Activated CD4-positive, alpha-beta memory T cell treated with anti-CD3 and anti-CD28 coated beads for 36 hours (primary cell): ENCODE measurements at regions of chr1 and their contacts with region 1.

Region 1: DNA sequence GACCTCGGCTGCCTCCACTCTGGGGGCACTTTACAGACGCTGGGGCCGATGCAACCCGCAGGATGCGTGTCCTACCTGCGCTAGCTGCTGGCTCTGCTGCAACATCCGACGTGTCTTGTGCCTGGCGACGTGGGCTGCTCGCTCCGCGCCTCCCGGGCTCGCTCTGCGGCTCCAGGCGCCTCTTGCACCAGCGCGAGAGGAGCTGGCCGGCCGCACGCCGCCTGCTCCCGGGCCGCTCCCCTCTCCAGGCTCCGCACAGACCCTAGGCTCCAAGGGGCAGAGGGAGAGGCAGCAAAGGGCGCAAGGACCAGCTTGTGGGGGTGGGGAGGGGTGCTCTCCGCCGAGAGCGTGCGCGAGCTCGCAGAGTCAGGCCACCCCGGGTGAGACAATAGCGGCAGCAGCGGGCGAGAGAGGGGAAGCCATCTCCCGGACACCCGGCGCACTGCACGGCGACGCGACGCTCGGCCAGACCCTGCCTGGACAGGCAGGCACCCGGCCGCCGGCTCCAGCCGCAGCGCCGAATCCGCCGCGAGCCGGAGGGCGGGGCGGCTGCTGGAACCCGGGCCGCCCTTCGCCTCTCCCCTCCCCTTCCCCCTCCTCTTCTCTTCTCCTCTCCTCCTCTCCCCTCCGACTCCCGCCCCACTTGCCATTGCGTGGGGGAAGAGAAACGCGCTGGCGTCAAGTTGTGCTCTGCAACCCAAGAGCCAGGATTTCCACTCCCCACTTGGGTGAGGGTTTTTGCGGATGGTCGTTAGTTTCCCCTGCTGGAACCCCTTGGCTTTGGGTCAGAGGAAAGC is at the start of gene PIK3C2B:
- DNase-seq: peak; percentile 86
- H3K4me3 Mint-ChIP-seq: peak within 1 kb of the TSS; percentile 84
- H3K27ac Mint-ChIP-seq: peak within 1 kb of the TSS; percentile 92
- H3K4me1 Mint-ChIP-seq: peaks cover 50% of the 10 kb centered on the region
- H3K27me3 Mint-ChIP-seq: no peaks in the 10 kb centered on the region
- total RNA-seq, gene PIK3C2B: 43.4 to 46.4 TPM

Region 2: DNA sequence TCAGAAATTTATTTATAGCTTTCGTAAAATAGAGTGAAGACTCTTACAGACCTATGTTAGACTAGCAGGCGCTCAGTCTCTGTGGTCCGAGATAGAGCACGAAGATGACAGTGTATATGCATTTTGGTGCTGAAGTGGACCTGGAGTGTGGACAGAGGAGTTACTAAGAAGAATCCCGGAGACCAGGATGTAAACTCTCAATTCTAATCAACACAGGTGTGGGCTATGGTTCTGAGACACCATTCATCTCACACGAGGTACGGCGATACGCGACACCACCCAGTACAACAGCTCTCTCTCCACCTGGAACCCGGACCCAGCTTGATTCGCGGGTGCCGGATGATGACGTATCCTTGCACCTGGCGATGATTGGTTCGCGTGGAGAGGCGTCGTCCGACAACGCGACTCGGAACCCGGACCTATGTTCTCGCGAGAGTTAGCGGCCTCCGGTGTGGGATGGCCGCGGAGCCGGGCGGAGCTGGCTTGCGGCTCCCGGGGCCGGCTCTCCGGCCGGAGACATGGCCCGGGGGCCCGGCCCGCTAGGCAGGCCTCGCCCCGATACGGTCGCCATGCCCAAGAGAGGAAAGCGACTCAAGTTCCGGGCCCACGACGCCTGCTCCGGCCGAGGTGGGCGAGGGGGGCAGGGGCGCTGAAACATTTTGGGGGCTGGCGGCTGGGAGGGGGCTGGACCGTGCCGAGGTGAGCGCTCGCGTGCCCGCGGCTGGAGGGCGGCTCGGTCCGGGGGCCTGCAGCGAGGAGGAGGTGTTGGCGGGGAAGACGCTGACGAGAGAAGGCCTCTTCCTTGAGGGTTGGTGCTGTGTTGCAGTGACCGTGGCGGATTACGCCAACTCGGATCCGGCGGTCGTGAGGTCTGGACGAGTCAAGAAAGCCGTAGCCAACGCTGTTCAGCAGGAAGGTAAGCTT is 1487.3 kb before region 1 on chr1 and contains the start of gene TMEM183A:
- CTCF ChIA-PET with region 1: no interaction called
- POLR2A ChIA-PET with region 1: no interaction called
- intact Hi-C with region 1: loop called (anchors 10 kb)
- DNase-seq: peak; percentile 97
- H3K4me3 Mint-ChIP-seq: peak within 1 kb of the TSS; percentile 80
- H3K27ac Mint-ChIP-seq: peak within 1 kb of the TSS; percentile 96
- H3K4me1 Mint-ChIP-seq: peaks cover 24% of the 10 kb centered on the region
- H3K27me3 Mint-ChIP-seq: no peaks in the 10 kb centered on the region
- total RNA-seq, gene TMEM183A: 68.1 to 76.5 TPM

Region 3: GRCh38 chr1:204446370-204447111 is 47.9 kb before region 1 on chr1:
- CTCF ChIA-PET with region 1: interaction called, 1,224 read pairs
- POLR2A ChIA-PET with region 1: interaction called, 23 read pairs
- intact Hi-C with region 1: loop called (anchors 1 kb)
- DNase-seq: peak; percentile 86
- H3K4me3 Mint-ChIP-seq: no peak overlapping the region
- H3K27ac Mint-ChIP-seq: peak overlapping the region; percentile 76
- H3K4me1 Mint-ChIP-seq: peaks cover 77% of the 10 kb centered on the region
- H3K27me3 Mint-ChIP-seq: no peaks in the 10 kb centered on the region

Region 4: DNA sequence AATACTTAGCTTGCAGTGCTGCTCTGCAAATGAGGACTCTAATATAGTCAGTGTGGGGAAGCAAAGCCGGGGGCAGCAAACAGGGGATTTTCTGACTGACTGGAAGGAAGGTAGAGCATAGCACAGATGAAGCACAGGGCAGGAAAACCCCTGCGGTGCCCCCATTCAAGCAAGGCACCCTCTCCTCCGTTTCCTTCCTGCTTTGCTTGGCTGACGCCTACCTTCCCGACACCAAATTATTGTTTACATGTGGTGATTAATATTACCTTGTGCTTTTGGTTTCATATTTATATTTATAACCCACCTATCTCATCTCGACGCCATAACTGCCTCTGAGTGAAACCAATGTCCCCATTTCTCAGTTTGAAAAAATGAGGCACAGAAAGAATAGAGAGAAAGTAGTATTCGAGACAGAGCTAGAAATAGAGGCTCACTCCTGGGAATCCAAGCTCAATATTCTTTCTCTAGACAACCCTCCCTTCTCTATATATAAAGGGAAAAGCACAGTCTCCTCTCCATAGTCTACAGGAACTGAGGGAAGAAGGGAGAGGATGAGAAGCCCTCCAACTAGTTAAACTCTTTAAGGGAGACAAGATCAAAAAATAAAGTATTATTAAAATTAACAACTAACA is 41.2 kb before region 1 on chr1:
- CTCF ChIA-PET with region 1: interaction called, 1,224 read pairs
- POLR2A ChIA-PET with region 1: interaction called, 16 read pairs
- intact Hi-C with region 1: loop called (anchors 1 kb)
- DNase-seq: peak; percentile 89
- H3K4me3 Mint-ChIP-seq: peak overlapping the region; percentile 65
- H3K27ac Mint-ChIP-seq: peak overlapping the region; percentile 88
- H3K4me1 Mint-ChIP-seq: peaks cover 48% of the 10 kb centered on the region
- H3K27me3 Mint-ChIP-seq: no peaks in the 10 kb centered on the region

Region 5: DNA sequence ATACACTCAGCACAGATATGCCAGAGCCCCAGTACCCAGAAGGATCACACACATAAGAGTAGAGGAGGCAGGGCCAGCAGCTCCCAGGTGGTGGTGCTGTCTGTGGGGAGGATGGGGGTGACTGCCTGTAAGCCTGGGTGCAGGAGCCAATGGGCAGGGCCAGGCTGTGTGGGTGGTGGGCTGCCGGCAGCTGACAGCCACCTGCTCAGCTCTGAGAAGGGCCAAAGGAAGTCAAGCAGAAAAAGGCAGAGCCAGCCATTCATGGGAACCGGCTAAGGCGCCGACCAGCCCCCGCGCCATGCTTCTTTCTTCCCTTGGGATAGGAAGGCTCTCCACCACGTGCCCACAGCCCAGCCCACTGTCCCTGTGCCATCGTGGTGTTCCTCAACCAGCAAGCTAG is 14.0 kb before region 1 on chr1:
- CTCF ChIA-PET with region 1: interaction called, 11 read pairs
- POLR2A ChIA-PET with region 1: interaction called, 11 read pairs
- intact Hi-C with region 1: no loop called
- DNase-seq: no peak
- H3K4me3 Mint-ChIP-seq: no peak overlapping the region
- H3K27ac Mint-ChIP-seq: no peak overlapping the region
- H3K4me1 Mint-ChIP-seq: peaks cover 65% of the 10 kb centered on the region
- H3K27me3 Mint-ChIP-seq: no peaks in the 10 kb centered on the region

Region 6: DNA sequence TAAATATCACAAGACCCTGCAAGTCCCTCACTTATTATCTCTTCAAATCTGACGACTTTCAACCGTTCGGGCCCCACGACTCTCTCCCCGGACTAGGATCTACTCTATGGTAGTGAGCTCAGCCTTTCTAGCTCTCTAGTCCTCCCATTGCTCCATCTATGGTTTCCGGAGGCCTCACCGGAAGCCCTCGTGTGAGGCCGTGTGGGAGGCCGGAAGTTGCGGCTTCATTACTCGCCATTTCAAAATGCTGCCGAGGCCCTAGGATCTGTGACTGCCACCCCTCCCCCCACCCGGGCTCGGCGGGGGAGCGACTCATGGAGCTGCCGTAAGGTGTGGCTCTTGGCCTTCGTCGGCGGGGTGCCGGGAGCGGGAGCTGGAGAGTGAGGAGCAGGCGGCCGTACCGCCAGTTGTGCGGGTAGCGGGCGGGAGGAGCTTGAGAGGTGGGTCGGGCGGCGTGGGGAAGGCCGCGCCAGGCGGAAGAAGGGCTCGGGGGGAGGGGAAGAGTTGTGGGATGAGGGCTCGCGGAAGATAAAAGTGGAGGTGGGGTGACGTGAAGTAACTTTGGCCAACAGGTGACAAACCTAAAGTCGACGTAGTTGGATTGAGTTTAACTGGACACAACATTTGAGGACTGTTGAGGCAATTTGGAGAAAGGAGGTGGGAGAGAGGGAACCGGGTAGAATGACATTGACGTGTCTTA is 21.9 kb after region 1 on chr1 and contains the start of gene MDM4:
- CTCF ChIA-PET with region 1: interaction called, 10 read pairs
- POLR2A ChIA-PET with region 1: interaction called, 21 read pairs
- intact Hi-C with region 1: no loop called
- DNase-seq: peak; percentile 97
- H3K4me3 Mint-ChIP-seq: no peak within 1 kb of the TSS
- H3K27ac Mint-ChIP-seq: no peak within 1 kb of the TSS
- H3K4me1 Mint-ChIP-seq: peaks cover 52% of the 10 kb centered on the region
- H3K27me3 Mint-ChIP-seq: no peaks in the 10 kb centered on the region
- total RNA-seq, gene MDM4: 88.0 to 90.8 TPM